BJ (cell line): ENCODE measurements at regions of chr13 and their contacts with region 1.

Region 1: GRCh38 chr13:39566216-39566869 is 36.6 kb downstream of the LHFPL6 start:
- DNase-seq: no peak
- H3K4me3 ChIP-seq: no peak overlapping the region
- H3K27me3 ChIP-seq: no peaks in the 10 kb centered on the region
- CTCF ChIP-seq: no peak

Region 2: GRCh38 chr13:38444904-38445303 is 1121.4 kb before region 1 on chr13:
- CTCF ChIA-PET with region 1: no interaction called
- POLR2A ChIA-PET with region 1: interaction called, 26 read pairs
- DNase-seq: no peak
- H3K4me3 ChIP-seq: no peak overlapping the region
- H3K27me3 ChIP-seq: no peaks in the 10 kb centered on the region; the same call in 1 of the 2 replicates
- CTCF ChIP-seq: no peak

Region 3: GRCh38 chr13:39729156-39729555 is 162.8 kb after region 1 on chr13:
- CTCF ChIA-PET with region 1: no interaction called
- POLR2A ChIA-PET with region 1: no interaction called
- DNase-seq: no peak
- H3K4me3 ChIP-seq: no peak overlapping the region
- H3K27me3 ChIP-seq: no peaks in the 10 kb centered on the region
- CTCF ChIP-seq: no peak